ENCODE measurements at regions of chr18 and their contacts with region 1.

Region 1: GRCh38 chr18:2932247-2933181 is 80.4 kb downstream of the LPIN2 start:
- DNase-seq: peak in 1 of 2 donors; percentile 85
- H3K4me3 ChIP-seq: no peak overlapping the region
- H3K27ac ChIP-seq: no peak overlapping the region
- H3K4me1 ChIP-seq: peaks cover 0 to 21% (median 4%) of the 10 kb centered on the region in 4 donors
- H3K27me3 ChIP-seq: no peaks in the 10 kb centered on the region
- CTCF ChIP-seq: peak in 5 of 7 experiments; percentile 34 to 75 (median 67)
- EP300 ChIP-seq: no peak
- POLR2A ChIP-seq: no peak

Region 2: DNA sequence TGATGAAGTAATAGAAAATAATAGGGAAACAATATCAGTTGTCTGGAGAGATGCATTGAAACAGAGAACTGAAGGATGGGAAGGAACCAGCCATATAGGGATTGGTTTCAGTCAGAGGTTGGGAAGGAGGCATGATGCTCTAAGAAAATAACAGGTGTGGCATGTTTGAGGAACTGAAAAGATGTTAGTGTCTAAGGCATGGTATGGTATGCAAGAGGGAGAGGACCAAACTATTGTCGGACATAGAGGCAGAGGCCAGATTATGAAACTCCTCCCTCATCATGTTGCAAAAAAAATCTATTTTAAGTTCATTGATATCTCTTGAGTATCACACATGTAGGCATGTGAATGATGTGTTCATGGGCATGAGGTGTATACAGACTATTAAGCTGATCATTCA is 134.6 kb before region 1 on chr18:
- intact Hi-C with region 1: no loop called
- DNase-seq: no peak
- H3K4me3 ChIP-seq: no peak overlapping the region
- H3K27ac ChIP-seq: no peak overlapping the region
- H3K4me1 ChIP-seq: peaks cover 0 to 7% (median 0%) of the 10 kb centered on the region in 4 donors
- H3K27me3 ChIP-seq: no peaks in the 10 kb centered on the region
- CTCF ChIP-seq: no peak
- EP300 ChIP-seq: no peak
- POLR2A ChIP-seq: no peak

Region 3: DNA sequence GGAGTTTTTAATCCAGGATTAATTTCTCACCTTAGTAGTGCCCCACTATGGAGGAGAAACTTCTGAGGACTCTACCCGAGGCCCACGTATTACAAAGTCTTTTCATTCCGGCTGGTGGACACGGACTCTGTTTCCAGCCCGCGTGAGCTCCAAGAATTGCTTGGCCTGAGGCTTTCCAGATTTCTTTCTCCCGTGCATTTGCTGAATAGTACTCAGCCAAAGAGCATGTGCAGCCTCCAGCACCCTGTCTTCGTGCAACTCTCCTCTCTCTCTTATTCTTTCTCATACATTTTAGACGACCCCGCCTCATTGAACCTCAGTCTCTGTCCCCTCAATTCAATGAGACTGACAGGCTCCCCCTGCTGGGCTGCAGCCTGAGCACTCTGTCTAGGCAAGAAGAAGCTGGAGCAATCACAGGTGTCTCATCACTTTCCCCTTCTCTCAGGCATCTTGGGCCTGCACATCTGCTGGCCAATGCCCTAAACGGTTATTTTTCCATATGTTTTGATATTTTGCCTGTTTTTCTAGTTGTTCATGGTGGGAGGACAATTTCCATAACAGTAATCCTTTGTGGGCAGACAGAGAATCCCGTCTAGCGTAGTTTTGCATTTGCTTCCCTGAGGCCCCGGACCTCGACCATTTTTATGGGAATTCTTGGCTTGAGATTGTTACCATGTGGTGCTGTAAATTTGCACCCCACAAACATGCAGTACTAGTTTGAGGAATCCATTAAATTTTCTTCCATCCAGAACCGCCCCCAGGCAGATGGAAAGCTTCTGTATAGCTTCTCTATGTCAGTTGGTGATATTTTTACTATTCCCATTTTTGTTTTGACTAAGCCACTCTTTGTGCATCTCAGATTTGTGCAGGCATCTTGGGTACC is 130.5 kb after region 1 on chr18:
- intact Hi-C with region 1: loop called (anchors 10 kb)
- DNase-seq: peak; percentile 75 to 81
- H3K4me3 ChIP-seq: peak overlapping the region in 3 of 4 donors; percentile 16 to 26 (median 24)
- H3K27ac ChIP-seq: peak overlapping the region in 4 of 5 donors; percentile 5 to 72 (median 64)
- H3K4me1 ChIP-seq: peaks cover 0 to 43% (median 16%) of the 10 kb centered on the region in 4 donors
- H3K27me3 ChIP-seq: no peaks in the 10 kb centered on the region
- CTCF ChIP-seq: peak in 5 of 7 experiments; percentile 59 to 84 (median 78)
- EP300 ChIP-seq: no peak
- POLR2A ChIP-seq: no peak

Region 4: GRCh38 chr18:3151399-3152264 is 219.1 kb after region 1 on chr18:
- intact Hi-C with region 1: loop called (anchors 5 kb)
- DNase-seq: peak in 1 of 2 donors; percentile 53
- H3K4me3 ChIP-seq: no peak overlapping the region
- H3K27ac ChIP-seq: no peak overlapping the region
- H3K4me1 ChIP-seq: peaks cover 0 to 39% (median 8%) of the 10 kb centered on the region in 4 donors
- H3K27me3 ChIP-seq: no peaks in the 10 kb centered on the region
- CTCF ChIP-seq: peak in 5 of 7 experiments; percentile 31 to 80 (median 73)
- EP300 ChIP-seq: no peak
- POLR2A ChIP-seq: no peak